ENCODE measurements at regions of chr7 and their contacts with region 1.

Region 1: GRCh38 chr7:44200647-44201461 is at the start of gene YKT6:
- DNase-seq: peak; percentile 94
- ATAC-seq: peak; percentile 96
- H3K4me3 Mint-ChIP-seq: peak within 1 kb of the TSS; percentile 85
- H3K27ac Mint-ChIP-seq: no peak within 1 kb of the TSS
- H3K4me1 Mint-ChIP-seq: peaks cover 14% of the 10 kb centered on the region
- H3K27me3 Mint-ChIP-seq: peaks cover 23% of the 10 kb centered on the region
- CTCF ChIP-seq: no peak
- total RNA-seq, gene YKT6: 82.2 to 102 TPM (median 83.7 TPM) in 3 replicates

Region 2: DNA sequence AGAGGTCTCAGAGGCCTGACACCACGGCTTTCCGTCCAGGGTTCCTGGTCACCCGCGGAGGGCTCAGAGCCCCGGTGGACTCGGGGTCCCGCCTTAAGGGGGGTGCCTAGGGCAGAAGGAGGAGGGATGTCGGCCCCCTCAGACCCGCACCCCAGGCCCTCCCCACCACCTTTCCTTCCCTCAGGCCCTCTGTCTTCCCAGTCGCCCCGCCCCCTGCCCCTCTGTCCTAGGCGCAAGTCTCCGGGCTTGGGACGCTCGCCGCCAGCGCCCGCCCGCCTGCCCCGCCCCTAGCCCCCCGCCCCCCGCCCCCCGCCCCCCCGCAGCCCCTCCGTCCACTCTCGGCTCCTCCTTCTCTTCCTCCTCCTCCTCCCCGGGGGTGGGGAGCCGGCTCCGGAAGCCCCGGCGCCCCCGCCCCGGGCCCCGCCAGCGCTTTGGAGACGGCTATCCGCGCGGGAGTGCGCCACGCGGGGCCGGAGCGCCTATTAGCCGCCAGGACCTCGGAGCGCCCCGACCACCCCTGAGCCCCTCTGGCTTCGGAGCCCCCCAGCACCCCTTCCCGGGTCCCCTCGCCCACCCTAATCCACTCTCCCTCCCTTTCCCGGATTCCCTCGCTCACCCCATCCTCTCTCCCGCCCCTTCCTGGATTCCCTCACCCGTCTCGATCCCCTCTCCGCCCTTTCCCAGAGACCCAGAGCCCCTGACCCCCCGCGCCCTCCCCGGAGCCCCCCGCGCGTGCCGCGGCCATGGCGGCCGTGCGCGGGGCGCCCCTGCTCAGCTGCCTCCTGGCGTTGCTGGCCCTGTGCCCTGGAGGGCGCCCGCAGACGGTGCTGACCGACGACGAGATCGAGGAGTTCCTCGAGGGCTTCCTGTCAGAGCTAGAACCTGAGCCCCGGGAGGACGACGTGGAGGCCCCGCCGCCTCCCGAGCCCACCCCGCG is 96.7 kb before region 1 on chr7 and contains the start of gene AEBP1:
- CTCF ChIA-PET with region 1: interaction called, 13 read pairs
- POLR2A ChIA-PET with region 1: no interaction called
- DNase-seq: peak; percentile 50
- ATAC-seq: peak; percentile 47
- H3K4me3 Mint-ChIP-seq: peak within 1 kb of the TSS; percentile 70
- H3K27ac Mint-ChIP-seq: no peak within 1 kb of the TSS
- H3K4me1 Mint-ChIP-seq: peaks cover 15% of the 10 kb centered on the region
- H3K27me3 Mint-ChIP-seq: peaks cover 27% of the 10 kb centered on the region
- CTCF ChIP-seq: no peak
- total RNA-seq, gene AEBP1: 50.8 to 55.5 TPM (median 52.4 TPM) in 3 replicates

Region 3: GRCh38 chr7:44131173-44132029 is 69.5 kb before region 1 on chr7:
- CTCF ChIA-PET with region 1: interaction called, 24 read pairs
- POLR2A ChIA-PET with region 1: no interaction called
- DNase-seq: peak; percentile 58
- ATAC-seq: peak; percentile 95
- H3K4me3 Mint-ChIP-seq: no peak overlapping the region
- H3K27ac Mint-ChIP-seq: no peak overlapping the region
- H3K4me1 Mint-ChIP-seq: peaks cover 18% of the 10 kb centered on the region
- H3K27me3 Mint-ChIP-seq: peaks cover 46% of the 10 kb centered on the region
- CTCF ChIP-seq: no peak

Measured in WTC11 (cell line).